MCF 10A (cell line): ENCODE measurements at regions of chr5 and their contacts with region 1.

Region 1: GRCh38 chr5:36264202-36264760 is 22.6 kb upstream of the NADK2 start:
- DNase-seq: no peak
- H3K4me3 Mint-ChIP-seq: no peak overlapping the region
- H3K27ac Mint-ChIP-seq: no peak overlapping the region
- H3K4me1 Mint-ChIP-seq: no peaks in the 10 kb centered on the region
- H3K27me3 Mint-ChIP-seq: peaks cover 14% of the 10 kb centered on the region
- CTCF ChIP-seq: no peak

Region 2: GRCh38 chr5:36252722-36253365 is 11.4 kb before region 1 on chr5:
- CTCF ChIA-PET with region 1: interaction called, 16 read pairs
- POLR2A ChIA-PET with region 1: interaction called, 9 read pairs
- intact Hi-C with region 1: no loop called
- DNase-seq: peak; percentile 21
- H3K4me3 Mint-ChIP-seq: no peak overlapping the region
- H3K27ac Mint-ChIP-seq: no peak overlapping the region
- H3K4me1 Mint-ChIP-seq: no peaks in the 10 kb centered on the region
- H3K27me3 Mint-ChIP-seq: no peaks in the 10 kb centered on the region
- CTCF ChIP-seq: no peak

Region 3: GRCh38 chr5:36305571-36306326 is 41.5 kb after region 1 on chr5:
- CTCF ChIA-PET with region 1: interaction called, 51 read pairs
- POLR2A ChIA-PET with region 1: no interaction called
- intact Hi-C with region 1: loop called (anchors 1 kb)
- DNase-seq: peak; percentile 65
- H3K4me3 Mint-ChIP-seq: no peak overlapping the region
- H3K27ac Mint-ChIP-seq: peak overlapping the region; percentile 47
- H3K4me1 Mint-ChIP-seq: peaks cover 11% of the 10 kb centered on the region
- H3K27me3 Mint-ChIP-seq: peaks cover 27% of the 10 kb centered on the region
- CTCF ChIP-seq: peak; percentile 49

Region 4: DNA sequence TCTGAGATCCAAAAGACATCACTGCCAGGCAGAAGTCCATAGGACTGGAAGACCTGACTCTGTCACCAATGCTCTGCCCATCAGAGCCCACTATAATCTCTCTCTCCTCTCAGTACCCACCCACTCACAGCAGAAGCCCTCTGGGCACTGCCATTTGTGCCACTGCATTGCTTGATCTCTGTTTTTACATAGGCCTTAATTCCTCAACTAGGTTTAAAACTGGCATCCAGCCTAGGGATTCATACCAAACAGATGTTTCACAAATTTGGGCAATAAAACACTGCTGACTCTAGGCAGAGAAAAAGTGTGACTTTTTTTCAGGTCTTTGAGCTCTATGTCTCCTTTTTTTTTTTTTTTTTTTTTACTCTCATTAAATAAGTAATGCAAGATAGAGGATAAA is 128.5 kb after region 1 on chr5:
- CTCF ChIA-PET with region 1: interaction called, 18 read pairs
- POLR2A ChIA-PET with region 1: no interaction called
- intact Hi-C with region 1: loop called (anchors 1 kb)
- DNase-seq: peak; percentile 64
- H3K4me3 Mint-ChIP-seq: no peak overlapping the region
- H3K27ac Mint-ChIP-seq: peak overlapping the region; percentile 20
- H3K4me1 Mint-ChIP-seq: peaks cover 14% of the 10 kb centered on the region
- H3K27me3 Mint-ChIP-seq: no peaks in the 10 kb centered on the region
- CTCF ChIP-seq: no peak

Region 5: DNA sequence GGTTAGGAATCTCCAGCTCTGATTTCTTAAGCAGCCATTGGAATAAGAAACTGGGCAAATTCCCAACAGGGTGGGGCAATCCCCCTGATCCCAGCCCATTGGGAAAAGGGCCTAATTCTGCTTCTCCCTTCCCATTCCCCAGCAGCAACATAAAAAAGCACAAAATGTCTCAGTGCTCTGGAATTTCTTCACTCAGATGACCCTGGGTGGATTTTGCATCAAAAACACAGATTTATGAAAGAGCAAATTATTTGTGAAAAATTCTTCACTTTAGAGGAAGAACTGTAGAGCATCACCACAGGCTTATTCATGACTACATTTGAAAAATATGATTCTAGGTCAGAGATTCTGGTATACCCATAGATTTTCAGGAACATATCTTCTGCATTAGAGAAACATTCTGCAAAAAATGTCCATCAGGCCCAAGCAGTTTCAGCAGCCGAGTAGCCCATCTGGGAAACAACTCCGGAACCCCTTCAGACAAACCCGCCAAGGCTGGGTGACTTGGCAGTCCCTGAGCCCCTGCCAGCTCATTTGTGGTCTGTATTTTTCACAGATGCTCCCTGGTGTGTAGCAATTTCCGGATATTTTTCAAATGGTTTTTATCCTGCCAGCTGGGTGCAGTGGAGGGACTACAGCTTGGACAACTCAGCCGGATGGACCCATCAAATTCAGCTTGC is 139.5 kb after region 1 on chr5:
- CTCF ChIA-PET with region 1: interaction called, 19 read pairs
- POLR2A ChIA-PET with region 1: no interaction called
- intact Hi-C with region 1: loop called (anchors 1 kb)
- DNase-seq: peak; percentile 79
- H3K4me3 Mint-ChIP-seq: no peak overlapping the region
- H3K27ac Mint-ChIP-seq: peak overlapping the region; percentile 40
- H3K4me1 Mint-ChIP-seq: peaks cover 11% of the 10 kb centered on the region
- H3K27me3 Mint-ChIP-seq: no peaks in the 10 kb centered on the region
- CTCF ChIP-seq: no peak

Region 6: DNA sequence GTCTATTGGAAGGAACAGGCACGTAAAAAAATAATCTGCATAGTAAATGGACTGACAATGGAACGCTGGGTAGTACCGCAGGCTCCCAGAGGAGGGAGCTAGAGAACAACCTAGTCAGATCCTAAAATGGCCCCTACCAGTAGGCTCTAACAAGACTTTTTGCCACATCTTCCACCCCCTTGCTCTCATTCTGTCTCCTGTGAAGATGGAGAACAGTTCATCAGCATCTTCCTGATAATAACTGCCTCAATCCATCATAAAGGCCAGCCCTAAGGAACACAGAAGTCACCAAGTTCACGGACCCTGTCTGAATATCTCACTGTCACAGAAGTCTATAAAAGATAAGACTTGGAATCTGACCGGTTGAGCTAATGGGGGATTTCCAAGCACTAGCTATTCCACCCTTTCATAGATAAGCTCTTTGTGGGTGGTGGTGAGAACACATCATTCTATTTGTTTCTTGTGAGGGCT is 475.5 kb after region 1 on chr5:
- CTCF ChIA-PET with region 1: no interaction called
- POLR2A ChIA-PET with region 1: no interaction called
- intact Hi-C with region 1: no loop called
- DNase-seq: peak; percentile 77
- H3K4me3 Mint-ChIP-seq: no peak overlapping the region
- H3K27ac Mint-ChIP-seq: no peak overlapping the region
- H3K4me1 Mint-ChIP-seq: peaks cover 8% of the 10 kb centered on the region
- H3K27me3 Mint-ChIP-seq: peaks cover 15% of the 10 kb centered on the region
- CTCF ChIP-seq: peak; percentile 87